Naive thymus-derived CD4-positive, alpha-beta T cell (primary cell): ENCODE measurements at regions of chr9 and their contacts with region 1.

Region 1: GRCh38 chr9:14314929-14315645 is 1.1 kb upstream of the NFIB start:
- DNase-seq: peak in 2 of 9 donors; percentile 8 to 24
- ATAC-seq: peak; percentile 54
- H3K4me3 ChIP-seq: peak overlapping the region; percentile 27
- H3K4me3 Mint-ChIP-seq: peak overlapping the region; percentile 75 to 88 (median 82)
- H3K27ac ChIP-seq: no peak overlapping the region
- H3K27ac Mint-ChIP-seq: no peak overlapping the region
- H3K4me1 ChIP-seq: peaks cover 0 to 4% of the 10 kb centered on the region in 2 donors
- H3K4me1 Mint-ChIP-seq: peaks cover 10 to 31% (median 25%) of the 10 kb centered on the region in 7 donors
- H3K27me3 ChIP-seq: peaks cover 0 to 25% of the 10 kb centered on the region in 2 donors
- H3K27me3 Mint-ChIP-seq: peaks cover 51 to 77% (median 66%) of the 10 kb centered on the region in 5 donors

Region 2: DNA sequence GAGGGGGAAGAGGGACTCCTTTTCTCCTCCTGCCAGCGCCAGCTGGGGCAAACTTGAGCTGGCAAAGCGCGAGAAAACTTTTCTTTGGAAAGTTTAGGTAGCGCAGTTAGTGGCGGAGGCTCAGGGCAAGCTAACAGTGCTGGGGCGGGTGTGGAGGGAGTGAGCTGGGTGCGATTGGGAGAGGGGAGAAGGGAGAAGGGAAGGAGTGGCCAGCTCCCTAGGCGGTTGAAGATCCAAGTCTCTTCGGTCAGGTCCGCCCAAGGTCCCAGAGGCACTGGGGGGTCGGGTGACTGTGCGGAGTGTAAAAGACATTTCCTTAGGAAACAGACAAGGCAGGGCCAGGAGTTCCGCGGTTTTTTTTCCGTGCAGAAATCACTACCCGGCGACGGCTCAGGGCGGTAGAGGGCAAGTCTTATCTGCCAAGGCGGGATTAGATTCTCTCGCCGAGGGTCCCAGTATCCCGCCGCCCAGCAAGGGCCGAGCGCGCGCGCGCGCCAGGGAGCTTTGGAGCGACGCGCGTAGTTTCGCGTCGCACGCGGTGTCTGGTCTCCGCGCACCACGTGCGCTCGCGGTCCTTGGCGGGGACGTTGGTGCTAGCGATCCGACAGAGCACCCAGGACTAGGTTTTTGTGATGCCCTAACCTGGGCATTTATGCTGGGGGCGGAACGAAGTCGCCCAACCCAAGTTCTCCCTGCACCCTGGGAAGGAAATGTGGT is 32.5 kb after region 1 on chr9:
- CTCF ChIA-PET with region 1: no interaction called
- POLR2A ChIA-PET with region 1: no interaction called
- intact Hi-C with region 1: loop called in 1 of 2 experiments (anchors 2 kb)
- DNase-seq: no peak
- ATAC-seq: no peak
- H3K4me3 ChIP-seq: no peak overlapping the region
- H3K4me3 Mint-ChIP-seq: no peak overlapping the region
- H3K27ac ChIP-seq: no peak overlapping the region
- H3K27ac Mint-ChIP-seq: no peak overlapping the region
- H3K4me1 ChIP-seq: no peaks in the 10 kb centered on the region
- H3K4me1 Mint-ChIP-seq: peaks cover 3 to 19% (median 5%) of the 10 kb centered on the region in 7 donors
- H3K27me3 ChIP-seq: peaks cover 0 to 10% of the 10 kb centered on the region in 2 donors
- H3K27me3 Mint-ChIP-seq: peaks cover 50 to 59% (median 54%) of the 10 kb centered on the region in 5 donors